ENCODE measurements at regions of chr3 and their contacts with region 1.

Region 1: DNA sequence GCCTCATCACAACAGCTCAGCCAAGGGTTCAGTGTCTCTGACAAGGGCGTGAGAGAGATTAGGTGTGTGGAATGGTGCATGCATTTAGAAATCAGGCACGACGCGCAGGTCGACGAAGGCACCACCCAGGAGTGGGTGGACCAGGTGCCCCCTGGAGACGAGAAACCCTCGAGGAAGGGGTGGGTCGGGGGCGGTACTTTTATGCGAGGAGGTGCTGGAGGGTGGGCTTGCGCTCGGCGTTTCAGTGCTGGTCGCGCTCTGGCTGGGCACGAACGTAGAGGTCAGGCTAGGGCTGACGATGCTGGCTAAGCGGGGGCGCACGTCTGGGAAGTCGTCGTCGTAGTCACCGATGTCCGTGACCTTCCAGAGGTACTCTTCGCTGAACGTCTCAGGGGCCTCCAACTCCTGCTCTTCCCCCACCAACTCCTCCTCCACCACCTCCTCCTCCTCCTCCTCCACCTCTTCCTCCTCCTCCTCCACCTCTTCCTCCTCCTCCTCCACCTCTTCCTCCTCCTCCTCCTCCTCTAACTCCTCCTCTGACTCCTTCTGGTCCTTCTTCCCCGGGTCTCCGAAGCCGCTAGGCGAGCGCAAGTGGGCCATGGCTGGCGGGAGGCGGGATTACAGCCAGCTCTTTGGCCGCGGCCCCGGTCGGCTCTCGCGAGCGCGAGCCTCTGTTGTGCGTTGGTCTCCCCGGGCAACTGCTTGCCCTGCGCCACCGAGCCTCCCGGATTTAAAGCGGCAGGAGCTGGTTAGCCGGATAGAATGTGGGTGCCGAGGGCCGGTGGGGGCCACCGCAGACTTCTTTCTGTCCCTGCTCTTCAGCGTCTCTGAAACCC is at the start of gene ERICH6:
- DNase-seq: peak; percentile 91 to 95 (median 93)
- ATAC-seq: peak; percentile 99
- H3K4me3 ChIP-seq: peak within 1 kb of the TSS; percentile 34 to 83 (median 72)
- H3K27ac ChIP-seq: peak within 1 kb of the TSS; percentile 25 to 90 (median 80)
- H3K4me1 ChIP-seq: peaks cover 0 to 13% (median 7%) of the 10 kb centered on the region in 12 donors
- H3K27me3 ChIP-seq: no peaks in the 10 kb centered on the region
- CTCF ChIP-seq: peak in 7 of 12 donors; percentile 5 to 16 (median 9)
- POLR2A ChIP-seq: peak in 1 of 2 donors; percentile 47
- total RNA-seq, gene ERICH6: 0.32 to 0.54 TPM in 2 of 9 donors, not detected in the others

Region 2: DNA sequence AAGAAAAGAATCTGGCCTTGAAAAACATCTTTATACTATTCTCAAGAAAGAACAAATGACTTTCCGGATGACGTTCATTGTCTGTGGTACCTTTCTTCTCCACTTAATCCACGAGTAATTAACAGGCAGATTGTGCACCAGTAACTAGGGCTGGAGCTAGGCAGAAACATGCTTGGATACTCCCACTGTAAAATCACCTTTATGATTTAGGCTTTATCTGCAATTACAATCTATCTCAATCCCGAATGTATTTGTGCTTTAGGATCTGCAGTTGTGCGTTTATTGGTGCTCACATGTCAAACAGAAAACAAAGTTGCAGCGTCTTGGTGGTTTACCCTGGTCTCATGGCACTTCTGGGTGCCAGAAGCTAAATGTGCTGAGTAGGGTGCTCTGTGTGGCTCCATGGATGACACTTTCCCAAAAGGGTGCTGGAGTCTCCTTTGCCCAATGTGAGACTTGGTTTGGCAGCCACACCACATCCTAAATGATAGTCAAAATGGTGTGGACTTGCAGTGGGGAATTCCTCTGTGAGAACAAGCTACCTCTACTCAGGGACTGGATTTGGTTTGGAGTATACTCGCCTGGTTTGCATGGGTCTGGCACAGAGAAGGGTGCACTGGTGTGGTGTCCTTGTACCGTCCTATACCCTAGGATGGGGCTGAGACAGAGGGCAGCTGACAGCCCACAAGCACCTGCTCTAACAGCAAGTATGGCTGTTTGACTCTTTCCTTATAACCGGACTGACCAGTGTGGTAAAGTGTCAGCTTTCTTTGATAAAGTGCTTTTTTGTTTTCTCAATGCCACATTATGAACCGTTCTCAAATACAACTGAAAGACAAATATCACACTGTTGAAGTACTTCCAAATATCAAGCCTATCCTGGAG is 165.0 kb before region 1 on chr3:
- intact Hi-C with region 1: loop called in 2 of 10 experiments (anchors 10 kb)
- DNase-seq: no peak
- ATAC-seq: peak; percentile 22 to 55 (median 33)
- H3K4me3 ChIP-seq: no peak overlapping the region
- H3K27ac ChIP-seq: no peak overlapping the region
- H3K4me1 ChIP-seq: peaks cover 0 to 28% (median 0%) of the 10 kb centered on the region in 12 donors
- H3K27me3 ChIP-seq: no peaks in the 10 kb centered on the region
- CTCF ChIP-seq: no peak
- POLR2A ChIP-seq: no peak

Measured in heart left ventricle (tissue), 16 donors.